B cell (primary cell): ENCODE measurements at regions of chr4 and their contacts with region 1.

Region 1: DNA sequence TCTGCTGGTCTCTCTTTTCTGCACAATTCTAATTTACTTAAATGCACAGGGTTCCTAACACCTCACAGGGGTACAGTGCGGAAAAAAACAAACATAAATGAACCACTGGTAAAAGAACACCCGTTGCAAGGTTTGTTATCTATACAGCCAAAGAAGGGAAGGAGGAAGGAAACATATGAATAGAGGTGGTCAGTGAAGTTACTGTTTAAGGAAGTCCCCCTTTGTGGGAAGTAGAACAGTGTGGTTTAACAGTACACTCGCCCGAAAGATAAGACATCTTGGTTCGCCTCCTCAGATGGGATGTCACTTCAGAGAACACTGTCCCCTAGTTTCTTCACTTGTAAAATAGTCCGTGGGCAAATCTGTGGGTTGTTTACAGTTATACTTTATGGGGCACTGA is 57.5 kb downstream of the TEC start:
- DNase-seq: peak; percentile 65
- ATAC-seq: peak; percentile 79
- H3K4me3 ChIP-seq: peak overlapping the region in 4 of 5 experiments; percentile 7 to 35 (median 20)
- H3K4me3 Mint-ChIP-seq: peak overlapping the region; percentile 79
- H3K27ac ChIP-seq: peak overlapping the region; percentile 41 to 79
- H3K27ac Mint-ChIP-seq: peak overlapping the region; percentile 74
- H3K4me1 ChIP-seq: peaks cover 26 to 27% of the 10 kb centered on the region in 2 donors
- H3K4me1 Mint-ChIP-seq: peaks cover 33% of the 10 kb centered on the region
- H3K27me3 ChIP-seq: no peaks in the 10 kb centered on the region
- H3K27me3 Mint-ChIP-seq: no peaks in the 10 kb centered on the region
- CTCF ChIP-seq: no peak

Region 2: GRCh38 chr4:48141048-48141447 is 71.1 kb before region 1 on chr4:
- CTCF ChIA-PET with region 1: no interaction called
- POLR2A ChIA-PET with region 1: no interaction called
- intact Hi-C with region 1: loop called (anchors 5 kb)
- DNase-seq: peak; percentile 53
- ATAC-seq: peak; percentile 37
- H3K4me3 ChIP-seq: no peak overlapping the region
- H3K4me3 Mint-ChIP-seq: no peak overlapping the region
- H3K27ac ChIP-seq: no peak overlapping the region
- H3K27ac Mint-ChIP-seq: no peak overlapping the region
- H3K4me1 ChIP-seq: peaks cover 27 to 31% of the 10 kb centered on the region in 2 donors
- H3K4me1 Mint-ChIP-seq: peaks cover 34% of the 10 kb centered on the region
- H3K27me3 ChIP-seq: no peaks in the 10 kb centered on the region
- H3K27me3 Mint-ChIP-seq: no peaks in the 10 kb centered on the region
- CTCF ChIP-seq: peak; percentile 84